Transverse colon (tissue), 4 donors: ENCODE measurements at regions of chr6 and their contacts with region 1.

Region 1: DNA sequence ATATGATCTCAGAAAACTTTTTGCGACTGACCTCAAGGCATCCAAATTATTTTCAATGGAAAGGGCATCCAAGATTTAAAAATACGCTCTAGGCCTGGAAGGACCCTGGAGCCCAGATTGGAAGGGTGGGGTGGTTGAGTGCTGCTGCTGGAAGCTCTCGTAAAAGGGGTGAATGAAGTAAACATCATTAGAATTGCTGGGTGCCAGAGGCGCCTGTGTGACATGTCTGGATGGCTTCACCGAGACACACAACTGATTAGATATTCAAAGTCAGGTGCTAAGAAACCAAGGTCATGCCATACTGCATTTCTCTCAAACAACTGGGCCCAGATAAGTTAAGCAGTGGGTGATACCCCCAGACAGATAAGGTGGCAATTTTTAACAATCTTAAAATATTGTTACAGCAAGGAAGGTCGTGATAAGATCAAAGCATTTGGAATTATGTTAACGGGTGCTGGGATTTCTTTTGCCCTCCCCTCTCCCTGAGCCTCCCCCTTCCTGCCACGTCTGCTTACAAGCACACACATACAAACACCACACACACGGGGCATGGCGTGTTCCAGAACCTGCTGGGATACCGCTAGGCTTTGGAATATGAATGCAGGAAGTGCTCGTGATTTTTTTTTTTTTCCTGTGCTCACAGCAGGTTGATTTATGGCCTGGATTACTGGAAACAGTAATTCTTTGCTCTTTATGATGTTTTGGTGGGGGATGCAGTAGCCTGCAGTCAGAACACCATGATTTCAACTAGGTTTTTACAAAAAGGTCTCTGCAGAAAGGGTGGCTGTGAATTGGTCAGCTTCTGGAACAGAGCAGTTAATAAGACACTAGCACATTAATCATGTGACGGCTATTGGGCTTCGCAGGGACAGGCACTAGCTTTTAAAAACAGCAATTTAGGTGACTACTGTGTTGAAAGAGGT is 551.2 kb downstream of the QKI start:
- DNase-seq: no peak
- H3K4me3 ChIP-seq: no peak overlapping the region
- H3K27ac ChIP-seq: peak overlapping the region in 1 of 4 donors; percentile 61
- H3K4me1 ChIP-seq: peaks cover 0 to 5% (median 0%) of the 10 kb centered on the region in 4 donors
- H3K27me3 ChIP-seq: no peaks in the 10 kb centered on the region
- CTCF ChIP-seq: no peak
- EP300 ChIP-seq: no peak
- POLR2A ChIP-seq: no peak

Region 2: DNA sequence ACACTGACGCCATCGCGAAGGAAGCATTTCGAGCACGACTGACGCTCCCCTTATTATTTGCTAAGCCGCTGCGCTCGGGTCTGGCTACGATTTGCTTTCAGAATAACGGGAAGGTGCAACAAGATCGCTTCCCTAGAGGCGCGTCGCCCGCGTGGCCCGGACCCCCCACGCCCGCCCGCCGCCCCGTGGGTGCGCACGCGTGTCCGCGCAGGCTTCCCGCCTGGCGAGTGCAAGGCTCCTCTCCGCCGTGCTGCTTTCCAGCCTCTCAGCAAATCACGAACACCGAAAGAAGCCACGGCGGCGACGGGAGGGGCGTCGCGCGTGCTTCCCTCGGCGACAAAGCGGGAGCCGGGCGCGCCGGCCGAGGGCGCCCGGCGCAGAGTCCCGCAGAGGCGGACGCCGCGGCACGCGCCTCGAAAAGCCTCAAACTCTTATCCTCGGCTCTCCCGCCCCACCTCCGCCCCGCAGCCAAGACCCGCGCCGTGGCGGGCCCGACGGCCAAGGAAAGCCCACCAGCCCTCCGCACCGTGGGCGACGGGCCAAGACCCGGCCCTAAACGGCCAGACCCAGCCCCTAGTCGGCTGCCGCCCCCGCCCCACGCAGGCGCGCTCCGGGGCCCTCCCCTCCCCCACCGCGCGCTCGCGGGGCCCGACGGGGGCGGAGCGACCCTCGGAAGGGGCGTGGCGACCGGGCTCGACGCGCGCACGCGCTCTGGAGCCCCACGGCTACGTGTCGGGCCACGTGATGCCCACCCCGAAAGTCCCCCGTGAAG is 552.2 kb before region 1 on chr6:
- in situ Hi-C with region 1: no loop called
- intact Hi-C with region 1: loop called (anchors 10 kb)
- DNase-seq: peak; percentile 83
- H3K4me3 ChIP-seq: peak overlapping the region; percentile 46 to 80 (median 75)
- H3K27ac ChIP-seq: peak overlapping the region; percentile 95 to 99 (median 98)
- H3K4me1 ChIP-seq: peaks cover 0 to 28% (median 5%) of the 10 kb centered on the region in 4 donors
- H3K27me3 ChIP-seq: peaks cover 78% of the 10 kb centered on the region
- CTCF ChIP-seq: no peak
- EP300 ChIP-seq: no peak
- POLR2A ChIP-seq: peak; percentile 56